Mammary epithelial cell (primary cell): ENCODE measurements at regions of chr13 and their contacts with region 1.

Region 1: GRCh38 chr13:97109841-97110492 is 112.2 kb upstream of the MBNL2 start:
- DNase-seq: peak; percentile 85
- H3K4me3 ChIP-seq: no peak overlapping the region
- H3K27ac ChIP-seq: no peak overlapping the region
- H3K4me1 ChIP-seq: peaks cover 16% of the 10 kb centered on the region
- H3K27me3 ChIP-seq: no peaks in the 10 kb centered on the region
- CTCF ChIP-seq: peak; percentile 62 to 95

Region 2: GRCh38 chr13:97212601-97213040 is 102.7 kb after region 1 on chr13:
- CTCF ChIA-PET with region 1: interaction called, 22 read pairs
- dilution Hi-C with region 1: no loop called
- in situ Hi-C with region 1: loop called in 1 of 2 experiments (anchors 5 kb)
- intact Hi-C with region 1: loop called (anchors 1 kb)
- DNase-seq: peak; percentile 67
- H3K4me3 ChIP-seq: no peak overlapping the region
- H3K27ac ChIP-seq: no peak overlapping the region
- H3K4me1 ChIP-seq: peaks cover 24% of the 10 kb centered on the region
- H3K27me3 ChIP-seq: no peaks in the 10 kb centered on the region
- CTCF ChIP-seq: peak; percentile 70 to 85

Region 3: GRCh38 chr13:97275265-97275664 is 165.3 kb after region 1 on chr13:
- CTCF ChIA-PET with region 1: interaction called, 4 read pairs
- dilution Hi-C with region 1: no loop called
- in situ Hi-C with region 1: no loop called
- intact Hi-C with region 1: loop called (anchors 5 kb)
- DNase-seq: peak; percentile 79
- H3K4me3 ChIP-seq: peak overlapping the region in 1 of 3 experiments; percentile 13
- H3K27ac ChIP-seq: peak overlapping the region; percentile 97
- H3K4me1 ChIP-seq: peaks cover 74% of the 10 kb centered on the region
- H3K27me3 ChIP-seq: no peaks in the 10 kb centered on the region
- CTCF ChIP-seq: no peak